ENCODE measurements at regions of chr2 and their contacts with region 1.

Region 1: GRCh38 chr2:71100195-71100964 is 29.6 kb downstream of the MCEE start:
- DNase-seq: peak; percentile 9
- H3K4me3 ChIP-seq: no peak overlapping the region
- H3K27me3 ChIP-seq: no peaks in the 10 kb centered on the region
- CTCF ChIP-seq: peak; percentile 83

Region 2: GRCh38 chr2:71068218-71069035 is 32.0 kb before region 1 on chr2 and contains the start of gene NAGK:
- CTCF ChIA-PET with region 1: interaction called, 19 read pairs
- POLR2A ChIA-PET with region 1: interaction called, 3 read pairs
- DNase-seq: peak; percentile 71
- H3K4me3 ChIP-seq: peak within 1 kb of the TSS; percentile 71
- H3K27me3 ChIP-seq: 0 out of 2 replicates have a peak, but pooled peaks cover 1% of the 10 kb centered on the region
- CTCF ChIP-seq: no peak
- polyA plus RNA-seq, gene NAGK: 99.7 and 118 TPM in 2 replicates

Region 3: DNA sequence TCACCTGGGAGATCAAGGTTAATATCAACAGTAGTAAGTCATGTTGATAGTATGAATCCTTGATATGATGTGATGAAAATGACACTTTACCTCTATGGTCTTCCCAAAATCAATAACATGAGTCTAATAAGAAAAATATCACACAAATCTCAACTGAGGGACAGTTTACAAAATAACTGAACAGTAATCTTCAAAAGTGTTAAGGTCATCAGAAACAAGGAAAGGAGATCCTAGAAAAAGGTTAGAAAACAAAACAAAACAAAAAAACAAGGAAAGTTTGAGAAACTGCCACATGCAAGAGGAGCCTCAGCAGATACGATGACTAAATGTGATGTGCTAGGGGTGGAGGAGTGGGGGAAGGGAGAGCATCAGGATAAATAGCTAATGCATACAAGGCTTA is 13.5 kb after region 1 on chr2:
- CTCF ChIA-PET with region 1: interaction called, 29 read pairs
- POLR2A ChIA-PET with region 1: interaction called, 3 read pairs
- DNase-seq: no peak
- H3K4me3 ChIP-seq: no peak overlapping the region
- H3K27me3 ChIP-seq: no peaks in the 10 kb centered on the region
- CTCF ChIP-seq: no peak

Region 4: GRCh38 chr2:71122387-71123298 is 22.3 kb after region 1 on chr2:
- CTCF ChIA-PET with region 1: interaction called, 14 read pairs
- POLR2A ChIA-PET with region 1: no interaction called
- DNase-seq: no peak
- H3K4me3 ChIP-seq: no peak overlapping the region
- H3K27me3 ChIP-seq: no peaks in the 10 kb centered on the region
- CTCF ChIP-seq: no peak